ENCODE measurements at regions of chr6 and their contacts with region 1.

Region 1: DNA sequence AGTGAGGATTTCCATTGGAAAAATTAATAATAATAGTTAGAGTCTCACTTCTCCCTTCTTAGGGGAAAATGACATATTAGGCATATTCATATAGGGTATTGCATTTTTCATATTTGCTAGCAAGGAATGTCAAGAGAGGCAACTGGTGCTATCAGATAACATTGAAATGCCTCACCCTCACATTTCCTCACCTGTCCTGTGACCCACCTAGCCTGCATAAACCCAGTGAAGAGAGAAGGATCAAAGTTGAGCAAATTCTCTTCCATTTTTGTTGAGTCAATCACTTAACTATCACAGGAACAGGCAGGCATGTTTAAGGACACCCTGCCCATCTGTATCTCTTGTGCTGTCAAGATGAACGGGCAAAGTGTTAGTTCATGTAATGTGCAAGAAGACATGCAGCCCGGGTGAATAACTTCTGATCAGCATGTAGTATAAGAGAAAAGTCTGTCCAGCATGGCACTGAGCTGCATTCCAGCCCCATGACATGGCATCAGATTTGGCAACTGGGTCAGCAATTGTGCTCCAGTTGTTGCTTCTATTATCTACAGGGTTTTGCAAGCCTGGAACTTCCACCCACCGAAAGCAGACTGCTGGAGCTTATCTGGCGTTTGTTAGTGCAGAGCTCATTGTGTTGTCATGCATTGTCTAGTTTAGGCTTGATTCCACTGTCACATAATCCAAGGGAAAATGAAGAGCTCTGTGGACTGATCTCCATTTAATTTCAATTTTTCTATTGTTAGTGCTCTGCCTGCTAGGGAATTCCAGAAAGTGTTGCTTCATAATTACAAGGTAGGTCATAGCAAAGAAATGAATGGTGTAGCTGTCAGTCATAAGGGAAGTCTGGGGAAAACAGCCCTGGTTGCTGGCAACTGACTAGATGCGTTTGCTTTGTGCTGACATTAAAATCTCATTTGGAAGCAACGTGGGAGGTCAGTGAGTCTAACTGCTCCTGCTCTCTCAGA is 138.4 kb upstream of the TNFAIP3 start:
- DNase-seq: no peak
- ATAC-seq: no peak
- H3K4me3 ChIP-seq: no peak overlapping the region
- H3K4me3 Mint-ChIP-seq: no peak overlapping the region
- H3K27ac ChIP-seq: no peak overlapping the region
- H3K27ac Mint-ChIP-seq: no peak overlapping the region
- H3K4me1 ChIP-seq: no peaks in the 10 kb centered on the region
- H3K4me1 Mint-ChIP-seq: no peaks in the 10 kb centered on the region
- H3K27me3 ChIP-seq: no peaks in the 10 kb centered on the region
- H3K27me3 Mint-ChIP-seq: peaks cover 3% of the 10 kb centered on the region
- CTCF ChIP-seq: no peak

Region 2: DNA sequence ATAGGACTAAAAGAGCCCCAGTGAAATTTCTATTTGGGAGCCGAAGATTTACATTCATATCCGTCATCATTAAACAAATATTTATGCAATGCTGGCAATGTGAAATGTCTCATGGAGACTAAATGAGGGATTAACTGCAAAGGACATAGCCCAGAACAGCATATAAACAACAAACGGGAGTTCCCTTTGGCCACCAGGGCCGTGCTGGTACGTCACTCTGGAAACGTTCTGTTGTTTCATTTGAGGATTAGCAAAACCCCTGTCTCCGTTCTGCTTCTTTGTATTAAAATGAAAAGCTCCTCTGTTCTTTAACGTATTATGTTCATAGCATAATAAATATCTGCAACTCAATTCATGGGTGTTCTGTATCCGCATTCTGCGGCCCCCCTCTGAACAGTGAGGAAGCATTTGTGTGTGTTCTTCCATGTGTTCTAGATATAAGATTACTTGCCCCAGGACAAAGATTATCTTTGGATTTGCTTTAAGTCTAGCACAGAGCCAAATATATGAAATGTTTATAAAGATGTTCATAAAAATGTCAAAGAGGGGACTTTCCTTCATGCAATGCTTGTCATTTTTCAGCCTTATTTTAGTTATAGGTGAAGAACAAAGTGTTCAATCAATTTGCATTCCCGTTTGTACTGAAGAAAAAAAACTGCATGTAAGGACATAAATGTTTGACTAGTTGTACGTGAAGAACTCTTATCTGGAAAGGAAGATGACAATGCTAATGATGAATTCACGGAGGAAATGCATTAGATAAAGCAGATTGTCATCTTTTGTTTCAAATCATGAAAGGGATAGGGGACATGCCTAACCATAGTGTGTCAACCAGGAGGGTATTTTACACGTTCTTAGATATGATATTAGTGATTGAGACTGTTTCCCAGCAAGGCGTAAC is 48.4 kb after region 1 on chr6:
- CTCF ChIA-PET with region 1: no interaction called
- POLR2A ChIA-PET with region 1: no interaction called
- intact Hi-C with region 1: loop called in 1 of 2 experiments (anchors 10 kb)
- DNase-seq: no peak
- ATAC-seq: no peak
- H3K4me3 ChIP-seq: no peak overlapping the region
- H3K4me3 Mint-ChIP-seq: no peak overlapping the region
- H3K27ac ChIP-seq: no peak overlapping the region
- H3K27ac Mint-ChIP-seq: no peak overlapping the region
- H3K4me1 ChIP-seq: no peaks in the 10 kb centered on the region
- H3K4me1 Mint-ChIP-seq: no peaks in the 10 kb centered on the region
- H3K27me3 ChIP-seq: no peaks in the 10 kb centered on the region
- H3K27me3 Mint-ChIP-seq: no peaks in the 10 kb centered on the region
- CTCF ChIP-seq: no peak